ENCODE measurements at regions of chr16 and their contacts with region 1.

Region 1: GRCh38 chr16:4506450-4506849 is 30.3 kb downstream of the HMOX2 start:
- DNase-seq: no peak
- H3K4me3 ChIP-seq: no peak overlapping the region
- H3K27ac ChIP-seq: peak overlapping the region in 3 of 4 donors; percentile 3 to 25 (median 8)
- H3K4me1 ChIP-seq: peaks cover 14 to 30% (median 24%) of the 10 kb centered on the region in 4 donors
- H3K27me3 ChIP-seq: no peaks in the 10 kb centered on the region
- CTCF ChIP-seq: peak; percentile 64 to 84 (median 78)
- EP300 ChIP-seq: no peak
- POLR2A ChIP-seq: no peak

Region 2: GRCh38 chr16:4461250-4462085 is 45.0 kb before region 1 on chr16:
- intact Hi-C with region 1: no loop called
- DNase-seq: no peak
- H3K4me3 ChIP-seq: no peak overlapping the region
- H3K27ac ChIP-seq: no peak overlapping the region
- H3K4me1 ChIP-seq: peaks cover 0 to 4% (median 0%) of the 10 kb centered on the region in 4 donors
- H3K27me3 ChIP-seq: no peaks in the 10 kb centered on the region
- CTCF ChIP-seq: no peak
- EP300 ChIP-seq: no peak
- POLR2A ChIP-seq: no peak

Region 3: GRCh38 chr16:4548124-4548523 is 41.7 kb after region 1 on chr16:
- intact Hi-C with region 1: loop called (anchors 2 kb)
- DNase-seq: no peak
- H3K4me3 ChIP-seq: no peak overlapping the region
- H3K27ac ChIP-seq: no peak overlapping the region
- H3K4me1 ChIP-seq: peaks cover 0 to 4% (median 2%) of the 10 kb centered on the region in 4 donors
- H3K27me3 ChIP-seq: peaks cover 0 to 3% (median 0%) of the 10 kb centered on the region in 4 donors
- CTCF ChIP-seq: no peak
- EP300 ChIP-seq: no peak
- POLR2A ChIP-seq: no peak